ENCODE measurements at regions of chr15 and their contacts with region 1.

Region 1: GRCh38 chr15:62389885-62390790 is 225.1 kb upstream of the C2CD4B start:
- DNase-seq: peak; percentile 81
- ATAC-seq: peak; percentile 91

Region 2: GRCh38 chr15:62165104-62165792 is 224.9 kb before region 1 on chr15 and contains the start of gene C2CD4B:
- intact Hi-C with region 1: no loop called
- DNase-seq: peak; percentile 76
- ATAC-seq: peak; percentile 84
- total RNA-seq, gene C2CD4B: 1.5 TPM

Region 3: GRCh38 chr15:62569460-62570412 is 179.6 kb after region 1 on chr15:
- intact Hi-C with region 1: loop called (anchors 10 kb)
- DNase-seq: peak; percentile 84
- ATAC-seq: peak; percentile 63

Region 4: GRCh38 chr15:62649793-62650420 is 259.8 kb after region 1 on chr15:
- intact Hi-C with region 1: loop called (anchors 10 kb)
- DNase-seq: peak; percentile 61
- ATAC-seq: peak; percentile 80

Measured in Right ventricle myocardium superior (tissue), 1 donor.